H1 (cell line): ENCODE measurements at regions of chr11 and their contacts with region 1.

Region 1: GRCh38 chr11:44256673-44257291 is 53.2 kb downstream of the ALX4 start:
- DNase-seq: no peak
- H3K4me3 ChIP-seq: no peak overlapping the region
- H3K27ac ChIP-seq: no peak overlapping the region
- H3K4me1 ChIP-seq: no peaks in the 10 kb centered on the region; a peak in 1 of 7 replicates
- H3K27me3 ChIP-seq: no peaks in the 10 kb centered on the region
- CTCF ChIP-seq: no peak
- EP300 ChIP-seq: no peak
- POLR2A ChIP-seq: no peak
- RAD21 ChIP-seq: no peak

Region 2: DNA sequence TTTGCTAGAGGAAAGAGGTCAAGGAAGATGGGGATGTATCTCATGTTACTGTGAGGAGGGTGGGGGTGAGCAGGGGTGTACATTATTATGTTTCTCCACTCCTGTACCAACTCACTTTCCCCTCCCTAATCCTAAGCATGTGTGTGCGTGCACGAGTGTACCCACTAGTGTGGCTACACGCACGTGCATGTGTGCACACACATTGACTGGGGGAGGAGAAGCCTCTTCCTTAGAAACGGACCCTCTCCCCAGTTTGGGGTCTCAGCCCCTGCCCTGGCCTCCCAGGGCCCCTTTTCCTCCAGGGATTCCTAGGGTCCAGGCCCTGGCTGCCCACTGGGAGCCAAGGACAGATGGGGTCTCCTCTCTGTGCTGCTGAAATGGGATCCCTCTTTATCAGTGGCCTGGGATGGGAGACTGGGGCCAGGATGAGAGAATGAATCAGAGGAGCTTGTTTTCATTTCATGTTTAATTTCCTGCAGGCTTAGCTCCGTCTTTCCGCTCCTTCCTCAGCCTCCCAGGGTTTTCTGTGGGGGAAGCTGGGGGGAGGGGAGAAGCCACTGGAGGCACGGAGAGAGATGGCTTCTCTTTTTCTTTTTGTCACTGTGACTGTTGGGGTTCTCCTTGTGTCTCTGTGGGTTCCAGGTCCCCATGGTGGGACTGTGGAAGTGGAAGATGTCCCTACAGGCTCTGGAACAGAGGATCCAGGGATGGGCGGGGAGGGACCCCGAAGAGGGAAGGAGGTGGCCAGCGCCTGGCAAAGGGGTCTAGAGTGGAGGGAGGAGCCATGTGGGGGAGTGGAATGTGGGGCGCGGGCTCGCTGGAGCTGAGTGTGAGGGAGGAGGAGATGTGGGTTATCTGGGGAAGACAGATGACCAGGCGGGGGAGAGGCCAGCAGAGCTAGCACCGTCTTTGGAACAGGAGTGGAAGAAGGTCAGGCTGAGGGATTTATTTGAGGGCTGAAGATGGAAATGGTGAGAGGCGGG is 12.9 kb after region 1 on chr11:
- CTCF ChIA-PET with region 1: interaction called, 13 read pairs
- POLR2A ChIA-PET with region 1: interaction called, 4 read pairs
- DNase-seq: no peak
- H3K4me3 ChIP-seq: no peak overlapping the region
- H3K27ac ChIP-seq: no peak overlapping the region
- H3K4me1 ChIP-seq: no peaks in the 10 kb centered on the region; a peak in 2 of 7 replicates
- H3K27me3 ChIP-seq: no peaks in the 10 kb centered on the region
- CTCF ChIP-seq: no peak
- EP300 ChIP-seq: no peak
- POLR2A ChIP-seq: no peak
- RAD21 ChIP-seq: no peak